Mammary epithelial cell (primary cell): ENCODE measurements at regions of chr15 and their contacts with region 1.

Region 1: GRCh38 chr15:25469377-25469776 is 30.6 kb upstream of the UBE3A start:
- DNase-seq: peak; percentile 4
- H3K4me3 ChIP-seq: no peak overlapping the region
- H3K27ac ChIP-seq: no peak overlapping the region
- H3K4me1 ChIP-seq: no peaks in the 10 kb centered on the region
- H3K27me3 ChIP-seq: no peaks in the 10 kb centered on the region
- CTCF ChIP-seq: no peak

Region 2: DNA sequence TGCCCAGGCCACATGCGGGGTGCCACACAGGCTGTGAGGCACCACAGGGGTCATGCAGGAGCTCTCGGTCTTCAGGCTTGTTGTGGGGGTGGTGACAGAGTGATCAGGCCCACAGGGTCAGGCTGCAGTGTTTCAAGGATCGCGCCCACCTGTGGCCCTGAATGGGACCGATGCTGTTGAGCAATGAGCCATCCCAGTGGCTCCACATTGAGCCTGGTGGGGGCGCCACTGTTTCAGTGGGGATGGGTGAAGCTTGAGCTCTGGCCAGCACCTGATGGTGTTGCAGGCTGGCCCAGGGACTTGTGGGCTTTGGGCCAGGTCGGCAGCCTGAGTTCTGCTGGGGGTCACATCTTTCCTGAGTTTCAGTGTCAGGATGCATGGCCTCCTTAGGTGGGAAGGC is 260.6 kb before region 1 on chr15:
- CTCF ChIA-PET with region 1: no interaction called
- dilution Hi-C with region 1: loop called (anchors 25 kb)
- in situ Hi-C with region 1: no loop called
- intact Hi-C with region 1: no loop called
- DNase-seq: no peak
- H3K4me3 ChIP-seq: no peak overlapping the region
- H3K27ac ChIP-seq: no peak overlapping the region
- H3K4me1 ChIP-seq: no peaks in the 10 kb centered on the region
- H3K27me3 ChIP-seq: no peaks in the 10 kb centered on the region
- CTCF ChIP-seq: no peak